Naive thymus-derived CD4-positive, alpha-beta T cell (primary cell): ENCODE measurements at regions of chr6 and their contacts with region 1.

Region 1: GRCh38 chr6:52284460-52285176 is at the start of gene MCM3:
- DNase-seq: peak; percentile 76 to 98 (median 97)
- ATAC-seq: peak; percentile 98
- H3K4me3 ChIP-seq: peak within 1 kb of the TSS; percentile 77
- H3K4me3 Mint-ChIP-seq: peak within 1 kb of the TSS in 4 of 10 donors; percentile 42 to 89 (median 58)
- H3K27ac ChIP-seq: peak within 1 kb of the TSS; percentile 74
- H3K27ac Mint-ChIP-seq: peak within 1 kb of the TSS in 6 of 9 donors; percentile 28 to 77 (median 30)
- H3K4me1 ChIP-seq: peaks cover 32 to 33% of the 10 kb centered on the region in 2 donors
- H3K4me1 Mint-ChIP-seq: peaks cover 22 to 58% (median 48%) of the 10 kb centered on the region in 7 donors
- H3K27me3 ChIP-seq: no peaks in the 10 kb centered on the region
- H3K27me3 Mint-ChIP-seq: no peaks in the 10 kb centered on the region
- total RNA-seq, gene MCM3: 20.3 to 157 (median 45.2) TPM

Region 2: DNA sequence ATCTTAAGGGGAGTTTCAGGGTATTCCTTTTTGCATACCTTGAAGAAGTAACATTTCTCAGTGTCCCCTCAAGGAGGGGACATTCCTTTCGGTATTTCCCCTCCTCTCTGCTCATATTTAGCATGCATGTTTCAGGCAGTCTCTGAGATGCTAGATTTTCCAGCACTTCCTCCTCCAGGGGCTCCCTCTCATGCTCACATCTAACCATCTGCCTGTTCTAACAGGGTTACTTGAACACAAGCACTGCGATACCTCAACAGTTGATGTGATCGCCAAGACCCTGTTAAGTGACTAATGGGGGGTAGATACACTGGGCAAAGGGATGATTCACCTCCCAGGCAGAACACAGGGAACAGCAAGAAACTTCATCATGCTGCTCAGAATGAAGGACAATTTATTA is 12.8 kb after region 1 on chr6:
- CTCF ChIA-PET with region 1: interaction called, 6 read pairs
- POLR2A ChIA-PET with region 1: no interaction called
- intact Hi-C with region 1: loop called in 1 of 2 experiments (anchors 1 kb)
- DNase-seq: no peak
- ATAC-seq: no peak
- H3K4me3 ChIP-seq: no peak overlapping the region
- H3K4me3 Mint-ChIP-seq: peak overlapping the region in 6 of 10 donors; percentile 6 to 53 (median 34)
- H3K27ac ChIP-seq: no peak overlapping the region
- H3K27ac Mint-ChIP-seq: peak overlapping the region in 6 of 9 donors; percentile 25 to 95 (median 64)
- H3K4me1 ChIP-seq: peaks cover 10 to 14% of the 10 kb centered on the region in 2 donors
- H3K4me1 Mint-ChIP-seq: peaks cover 20 to 59% (median 44%) of the 10 kb centered on the region in 7 donors
- H3K27me3 ChIP-seq: no peaks in the 10 kb centered on the region
- H3K27me3 Mint-ChIP-seq: no peaks in the 10 kb centered on the region

Region 3: GRCh38 chr6:52371656-52372191 is 87.1 kb after region 1 on chr6:
- CTCF ChIA-PET with region 1: interaction called, 3 read pairs
- POLR2A ChIA-PET with region 1: interaction called, 92 read pairs
- intact Hi-C with region 1: no loop called
- DNase-seq: no peak
- ATAC-seq: no peak
- H3K4me3 ChIP-seq: no peak overlapping the region
- H3K4me3 Mint-ChIP-seq: no peak overlapping the region
- H3K27ac ChIP-seq: peak overlapping the region; percentile 10
- H3K27ac Mint-ChIP-seq: peak overlapping the region in 7 of 9 donors; percentile 17 to 84 (median 78)
- H3K4me1 ChIP-seq: peaks cover 5 to 31% of the 10 kb centered on the region in 2 donors
- H3K4me1 Mint-ChIP-seq: peaks cover 26 to 95% (median 92%) of the 10 kb centered on the region in 7 donors
- H3K27me3 ChIP-seq: no peaks in the 10 kb centered on the region
- H3K27me3 Mint-ChIP-seq: no peaks in the 10 kb centered on the region

Region 4: GRCh38 chr6:52407467-52407866 is 122.8 kb after region 1 on chr6:
- CTCF ChIA-PET with region 1: interaction called, 88 read pairs
- POLR2A ChIA-PET with region 1: interaction called, 10 read pairs
- intact Hi-C with region 1: no loop called
- DNase-seq: peak in 5 of 9 donors; percentile 27 to 52 (median 43)
- ATAC-seq: peak; percentile 84
- H3K4me3 ChIP-seq: no peak overlapping the region
- H3K4me3 Mint-ChIP-seq: no peak overlapping the region
- H3K27ac ChIP-seq: no peak overlapping the region
- H3K27ac Mint-ChIP-seq: peak overlapping the region in 7 of 9 donors; percentile 20 to 79 (median 59)
- H3K4me1 ChIP-seq: no peaks in the 10 kb centered on the region
- H3K4me1 Mint-ChIP-seq: peaks cover 7 to 81% (median 56%) of the 10 kb centered on the region in 7 donors
- H3K27me3 ChIP-seq: no peaks in the 10 kb centered on the region
- H3K27me3 Mint-ChIP-seq: peaks cover 0 to under 1% (median 0%) of the 10 kb centered on the region in 5 donors

Region 5: GRCh38 chr6:52598123-52598823 is 313.7 kb after region 1 on chr6:
- CTCF ChIA-PET with region 1: no interaction called
- POLR2A ChIA-PET with region 1: no interaction called
- intact Hi-C with region 1: loop called in 1 of 2 experiments (anchors 2 kb)
- DNase-seq: peak in 2 of 9 donors; percentile 8 to 9
- ATAC-seq: peak; percentile 38
- H3K4me3 ChIP-seq: no peak overlapping the region
- H3K4me3 Mint-ChIP-seq: no peak overlapping the region
- H3K27ac ChIP-seq: no peak overlapping the region
- H3K27ac Mint-ChIP-seq: peak overlapping the region in 1 of 9 donors; percentile 32
- H3K4me1 ChIP-seq: no peaks in the 10 kb centered on the region
- H3K4me1 Mint-ChIP-seq: peaks cover 6 to 23% (median 10%) of the 10 kb centered on the region in 7 donors
- H3K27me3 ChIP-seq: no peaks in the 10 kb centered on the region
- H3K27me3 Mint-ChIP-seq: peaks cover 0 to 9% (median 6%) of the 10 kb centered on the region in 5 donors

Region 6: DNA sequence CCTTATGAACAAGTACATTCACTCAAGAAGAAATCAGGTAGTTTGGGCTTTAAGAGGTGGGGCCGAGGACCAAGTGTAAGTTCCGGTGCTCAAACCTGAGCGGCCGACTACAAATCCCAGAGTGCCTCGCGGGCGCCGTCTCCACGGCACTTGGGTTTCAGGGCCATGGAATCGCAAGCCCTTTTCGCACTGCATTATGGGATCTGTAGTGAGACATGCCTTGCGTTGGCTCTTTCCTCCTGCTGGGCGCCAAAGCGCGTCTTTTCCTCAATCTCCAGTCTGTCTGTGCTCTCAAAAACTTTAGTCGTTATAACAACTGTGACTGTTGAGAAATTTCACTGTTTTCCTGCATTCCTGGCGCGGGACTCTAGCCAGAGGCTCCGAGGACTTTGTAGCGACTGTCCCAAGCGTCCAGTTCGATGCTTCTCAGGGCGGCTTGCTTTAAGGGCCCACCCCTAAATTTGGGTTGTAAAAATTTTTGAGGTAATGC is 780.2 kb after region 1 on chr6:
- CTCF ChIA-PET with region 1: no interaction called
- POLR2A ChIA-PET with region 1: interaction called, 5 read pairs
- intact Hi-C with region 1: loop called (anchors 1 kb)
- DNase-seq: peak; percentile 81 to 98 (median 94)
- ATAC-seq: peak; percentile 91
- H3K4me3 ChIP-seq: peak overlapping the region; percentile 95
- H3K4me3 Mint-ChIP-seq: peak overlapping the region; percentile 86 to 100 (median 99)
- H3K27ac ChIP-seq: peak overlapping the region; percentile 78
- H3K27ac Mint-ChIP-seq: peak overlapping the region; percentile 90 to 99 (median 97)
- H3K4me1 ChIP-seq: peaks cover 22% of the 10 kb centered on the region in 2 donors
- H3K4me1 Mint-ChIP-seq: peaks cover 36 to 68% (median 56%) of the 10 kb centered on the region in 7 donors
- H3K27me3 ChIP-seq: no peaks in the 10 kb centered on the region
- H3K27me3 Mint-ChIP-seq: no peaks in the 10 kb centered on the region

Region 7: GRCh38 chr6:53294095-53294494 is 1009.5 kb after region 1 on chr6:
- CTCF ChIA-PET with region 1: no interaction called
- POLR2A ChIA-PET with region 1: no interaction called
- intact Hi-C with region 1: no loop called
- DNase-seq: peak in 1 of 9 donors; percentile 7
- ATAC-seq: no peak
- H3K4me3 ChIP-seq: no peak overlapping the region
- H3K4me3 Mint-ChIP-seq: peak overlapping the region in 1 of 10 donors; percentile 10
- H3K27ac ChIP-seq: no peak overlapping the region
- H3K27ac Mint-ChIP-seq: peak overlapping the region in 8 of 9 donors; percentile 41 to 86 (median 74)
- H3K4me1 ChIP-seq: peaks cover 35 to 41% of the 10 kb centered on the region in 2 donors
- H3K4me1 Mint-ChIP-seq: peaks cover 46 to 94% (median 83%) of the 10 kb centered on the region in 7 donors
- H3K27me3 ChIP-seq: no peaks in the 10 kb centered on the region
- H3K27me3 Mint-ChIP-seq: no peaks in the 10 kb centered on the region